Gastrocnemius medialis (tissue), 4 donors: ENCODE measurements at regions of chr3 and their contacts with region 1.

Region 1: DNA sequence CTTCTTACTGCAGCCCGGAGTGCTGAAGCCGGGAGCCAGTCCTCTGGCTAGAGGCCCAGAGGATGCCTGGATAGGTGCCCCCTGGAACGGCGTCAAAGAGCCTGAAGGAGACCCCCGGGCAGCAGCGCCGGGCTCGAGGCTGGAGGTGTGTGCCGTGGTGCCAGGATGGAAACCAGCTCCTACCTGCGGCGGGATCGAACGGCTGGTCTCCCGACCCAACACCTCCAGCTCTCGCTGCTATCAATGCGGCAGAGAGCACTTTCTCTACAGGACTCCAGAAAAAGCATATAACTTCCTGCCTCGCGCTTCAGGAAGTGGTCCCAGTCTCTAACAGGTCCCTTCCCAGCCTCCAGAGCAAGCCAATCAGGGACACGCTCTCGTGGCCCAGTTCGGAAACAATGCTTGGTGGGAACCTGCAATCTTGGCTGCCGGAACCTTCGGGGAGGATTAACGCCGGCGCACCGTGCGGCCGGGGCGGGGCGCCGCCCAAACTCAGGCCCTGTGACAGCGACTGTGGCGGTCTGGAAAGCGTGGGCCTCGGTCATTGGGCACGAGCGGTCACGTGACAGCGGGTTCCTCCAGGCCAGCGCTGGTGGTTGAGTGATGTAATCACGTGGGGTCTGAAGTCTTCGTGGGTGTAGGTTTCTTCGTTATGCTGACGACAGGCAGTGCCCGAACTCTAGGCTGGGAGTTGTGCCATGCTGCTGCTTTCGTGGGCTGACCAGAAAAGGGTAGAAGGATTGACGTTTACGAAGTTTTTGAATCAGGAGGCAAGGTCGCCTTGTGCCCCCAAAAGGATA is at the start of gene SLC33A1:
- DNase-seq: peak; percentile 99
- ATAC-seq: peak; percentile 96 to 97
- H3K4me3 ChIP-seq: peak within 1 kb of the TSS; percentile 75 to 99 (median 87)
- H3K27ac ChIP-seq: peak within 1 kb of the TSS; percentile 95 to 96 (median 95)
- H3K4me1 ChIP-seq: peaks cover 36 to 37% of the 10 kb centered on the region in 2 donors
- H3K27me3 ChIP-seq: no peaks in the 10 kb centered on the region
- CTCF ChIP-seq: peak in 3 of 5 experiments; percentile 7 to 55 (median 30)
- POLR2A ChIP-seq: peak; percentile 67 to 75
- total RNA-seq, gene SLC33A1: 7.0 to 9.3 (median 8.2) TPM

Region 2: GRCh38 chr3:154323891-154324738 is 1530.2 kb before region 1 on chr3 and contains the start of gene DHX36:
- in situ Hi-C with region 1: no loop called
- intact Hi-C with region 1: loop called (anchors 10 kb)
- DNase-seq: peak; percentile 82 to 84
- ATAC-seq: peak; percentile 85 to 93
- H3K4me3 ChIP-seq: peak within 1 kb of the TSS; percentile 86 to 96 (median 89)
- H3K27ac ChIP-seq: peak within 1 kb of the TSS; percentile 89 to 97 (median 93)
- H3K4me1 ChIP-seq: peaks cover 33 to 47% of the 10 kb centered on the region in 2 donors
- H3K27me3 ChIP-seq: no peaks in the 10 kb centered on the region
- CTCF ChIP-seq: no peak
- POLR2A ChIP-seq: peak; percentile 72 to 81
- total RNA-seq, gene DHX36: 59.0 to 211 (median 143) TPM

Region 3: GRCh38 chr3:155154255-155154654 is 700.1 kb before region 1 on chr3:
- in situ Hi-C with region 1: no loop called
- intact Hi-C with region 1: no loop called
- DNase-seq: no peak
- ATAC-seq: peak; percentile 43 to 63
- H3K4me3 ChIP-seq: no peak overlapping the region
- H3K27ac ChIP-seq: peak overlapping the region in 3 of 4 donors; percentile 40 to 53 (median 50)
- H3K4me1 ChIP-seq: peaks cover 0 to 15% of the 10 kb centered on the region in 2 donors
- H3K27me3 ChIP-seq: no peaks in the 10 kb centered on the region
- CTCF ChIP-seq: no peak
- POLR2A ChIP-seq: no peak

Region 4: DNA sequence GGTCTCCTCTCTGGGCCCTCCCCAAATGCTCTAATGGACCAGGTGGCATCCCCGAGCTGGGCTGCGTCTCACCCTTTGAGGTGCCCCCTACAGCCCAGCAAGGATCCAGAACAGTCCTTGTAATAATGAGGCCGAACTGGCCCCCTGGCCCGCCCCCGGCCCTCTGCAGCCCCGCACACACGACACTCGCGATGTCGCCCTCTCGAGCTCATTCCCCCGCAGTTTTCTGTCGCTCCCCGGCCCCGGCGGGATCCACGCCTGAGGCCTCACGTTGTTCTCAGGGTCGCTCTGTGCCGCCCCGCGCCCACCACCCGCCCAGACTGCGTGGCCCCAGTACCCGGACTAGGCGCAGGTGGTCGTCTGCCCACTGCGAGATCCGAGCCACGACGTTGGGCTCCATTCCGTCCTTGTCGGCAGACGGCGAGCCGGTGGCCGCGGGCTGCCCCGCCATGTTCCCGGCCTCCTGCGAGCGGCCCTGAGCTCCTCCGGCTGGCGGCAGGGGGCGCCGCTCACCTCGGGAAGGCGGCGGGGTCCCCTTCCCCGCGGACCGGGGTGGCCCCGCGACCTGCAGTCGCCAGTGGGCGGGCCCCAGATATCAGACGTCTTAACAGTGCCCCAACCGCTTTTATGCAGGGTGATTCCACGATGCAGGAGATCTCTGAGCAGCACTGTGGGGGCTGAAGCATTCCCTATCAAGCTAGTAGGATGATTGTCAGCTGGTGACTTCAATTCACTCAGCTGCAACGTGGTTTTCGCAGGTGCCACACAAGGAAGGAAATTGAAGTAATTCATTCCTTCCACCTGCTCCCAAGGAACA is 48.3 kb before region 1 on chr3 and contains the start of gene C3orf33:
- in situ Hi-C with region 1: no loop called
- intact Hi-C with region 1: loop called (anchors 5 kb)
- DNase-seq: peak; percentile 20 to 45
- ATAC-seq: peak; percentile 88
- H3K4me3 ChIP-seq: peak within 1 kb of the TSS; percentile 77 to 99 (median 80)
- H3K27ac ChIP-seq: peak within 1 kb of the TSS; percentile 81 to 92 (median 88)
- H3K4me1 ChIP-seq: no peaks in the 10 kb centered on the region
- H3K27me3 ChIP-seq: no peaks in the 10 kb centered on the region
- CTCF ChIP-seq: peak; percentile 77 to 90 (median 83)
- POLR2A ChIP-seq: no peak
- total RNA-seq, gene C3orf33: 1.4 to 6.1 (median 3.9) TPM

Region 5: DNA sequence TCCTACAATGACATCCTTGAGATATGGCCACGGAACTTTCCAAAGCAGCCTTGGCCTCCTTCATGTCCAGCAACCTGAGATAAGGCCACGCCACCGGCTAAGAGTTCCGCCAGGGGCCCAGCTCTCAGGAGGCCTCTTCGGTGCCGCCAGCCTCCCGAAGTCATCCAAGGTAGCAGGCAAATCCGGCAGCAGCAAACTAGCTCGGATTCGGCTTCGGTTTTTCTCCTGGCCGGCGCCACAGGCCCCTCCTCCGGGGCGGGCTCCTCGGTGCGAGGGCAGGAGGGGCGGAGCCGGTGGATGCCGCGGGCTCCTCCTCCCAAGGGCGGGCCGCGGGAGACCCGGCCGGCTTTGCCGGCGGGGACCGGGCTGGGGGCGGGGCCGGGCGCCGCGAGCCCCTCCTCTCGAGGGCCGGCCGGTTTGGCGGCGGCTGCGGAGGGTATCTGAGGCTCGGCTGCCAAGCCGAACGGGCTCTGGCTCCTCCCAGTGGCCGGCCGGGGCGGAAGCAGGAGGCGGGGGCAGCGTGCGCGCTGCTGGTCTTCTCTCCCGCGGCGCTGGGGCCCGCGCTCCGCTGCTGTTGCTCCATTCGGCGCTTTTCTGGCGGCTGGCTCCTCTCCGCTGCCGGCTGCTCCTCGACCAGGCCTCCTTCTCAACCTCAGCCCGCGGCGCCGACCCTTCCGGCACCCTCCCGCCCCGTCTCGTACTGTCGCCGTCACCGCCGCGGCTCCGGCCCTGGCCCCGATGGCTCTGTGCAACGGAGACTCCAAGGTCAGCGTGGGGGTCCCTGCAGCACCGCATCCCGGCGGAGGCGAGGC is 16.0 kb after region 1 on chr3 and contains the start of gene GMPS:
- in situ Hi-C with region 1: no loop called
- intact Hi-C with region 1: loop called (anchors 1 kb)
- DNase-seq: peak; percentile 84 to 93
- ATAC-seq: peak; percentile 92
- H3K4me3 ChIP-seq: peak within 1 kb of the TSS; percentile 84 to 99 (median 92)
- H3K27ac ChIP-seq: peak within 1 kb of the TSS; percentile 86 to 97 (median 93)
- H3K4me1 ChIP-seq: peaks cover 21 to 24% of the 10 kb centered on the region in 2 donors
- H3K27me3 ChIP-seq: no peaks in the 10 kb centered on the region
- CTCF ChIP-seq: peak; percentile 50 to 86 (median 74)
- POLR2A ChIP-seq: peak; percentile 72 to 76
- total RNA-seq, gene GMPS: 26.7 to 34.7 (median 32.5) TPM

Region 6: GRCh38 chr3:155960060-155960459 is 105.7 kb after region 1 on chr3:
- in situ Hi-C with region 1: no loop called
- intact Hi-C with region 1: no loop called
- DNase-seq: no peak
- ATAC-seq: no peak
- H3K4me3 ChIP-seq: no peak overlapping the region
- H3K27ac ChIP-seq: no peak overlapping the region
- H3K4me1 ChIP-seq: no peaks in the 10 kb centered on the region
- H3K27me3 ChIP-seq: no peaks in the 10 kb centered on the region
- CTCF ChIP-seq: no peak
- POLR2A ChIP-seq: no peak